ENCODE measurements at regions of chr19 and their contacts with region 1.

Region 1: DNA sequence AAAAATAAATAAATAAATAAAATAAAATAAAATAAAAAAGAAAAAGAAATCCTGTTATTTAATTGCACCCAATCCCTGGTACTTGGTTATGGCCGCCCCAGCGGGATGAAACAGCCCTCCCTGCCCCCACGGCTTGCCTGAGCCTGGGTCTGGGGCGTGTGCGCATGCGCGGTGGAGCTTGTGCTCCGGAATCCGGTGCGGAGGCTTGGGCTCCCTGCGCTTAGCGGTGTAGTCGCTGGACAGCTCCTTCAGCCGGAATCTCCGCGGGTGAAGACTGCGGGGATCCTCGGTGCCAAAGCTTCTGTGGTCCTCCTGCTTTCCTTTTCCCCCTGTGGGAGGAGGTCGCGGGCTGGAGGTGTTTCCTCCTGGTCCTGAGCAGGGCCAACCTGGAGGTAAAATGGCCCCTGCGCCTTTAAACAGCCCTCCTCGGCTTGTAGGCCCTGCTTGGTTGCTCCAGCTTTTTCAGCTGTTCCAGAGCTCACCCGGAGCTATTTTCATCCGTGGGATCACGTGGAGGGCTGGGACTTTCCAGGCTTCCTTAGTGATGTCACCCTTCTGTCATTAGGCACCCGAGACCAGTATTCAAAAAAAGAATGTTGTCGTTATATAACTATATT is at the start of gene PLA2G4C:
- DNase-seq: peak; percentile 94
- H3K4me3 ChIP-seq: peak within 1 kb of the TSS in 2 of 3 experiments; percentile 25 to 71
- H3K27ac ChIP-seq: peak within 1 kb of the TSS; percentile 96
- H3K4me1 ChIP-seq: peaks cover 32% of the 10 kb centered on the region
- H3K27me3 ChIP-seq: no peaks in the 10 kb centered on the region
- CTCF ChIP-seq: no peak
- POLR2A ChIP-seq: peak; percentile 60
- total RNA-seq, gene PLA2G4C: 32.6 and 63.4 TPM in 2 replicates

Region 2: DNA sequence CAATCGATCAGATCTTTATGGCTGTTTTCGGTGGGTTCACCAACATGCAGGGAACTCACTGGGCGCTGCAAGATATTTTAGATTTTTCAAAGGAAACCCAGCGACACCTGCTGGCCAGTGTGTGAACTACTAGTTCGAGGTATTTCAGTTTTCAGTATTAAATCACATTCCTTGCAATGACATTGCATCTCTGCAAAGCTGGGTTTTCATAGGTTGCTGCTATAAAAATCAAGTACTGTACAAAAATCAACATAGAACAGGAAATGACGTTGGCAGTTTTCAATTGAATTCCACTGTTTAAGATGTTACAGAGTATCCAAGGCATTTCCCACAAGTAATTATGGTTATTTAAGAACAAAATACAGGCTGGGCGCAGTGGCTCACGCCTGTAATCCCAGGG is 42.1 kb after region 1 on chr19:
- CTCF ChIA-PET with region 1: interaction called, 229 read pairs
- POLR2A ChIA-PET with region 1: interaction called, 6 read pairs
- dilution Hi-C with region 1: no loop called
- intact Hi-C with region 1: loop called (anchors 1 kb)
- DNase-seq: peak; percentile 98
- H3K4me3 ChIP-seq: no peak overlapping the region
- H3K27ac ChIP-seq: peak overlapping the region; percentile 94
- H3K4me1 ChIP-seq: peaks cover 15% of the 10 kb centered on the region
- H3K27me3 ChIP-seq: no peaks in the 10 kb centered on the region
- CTCF ChIP-seq: peak; percentile 65 to 67
- POLR2A ChIP-seq: peak; percentile 32

Measured in endothelial cell of umbilical vein (primary cell).